Caco-2 (cell line): ENCODE measurements at regions of chr3 and their contacts with region 1.

Region 1: DNA sequence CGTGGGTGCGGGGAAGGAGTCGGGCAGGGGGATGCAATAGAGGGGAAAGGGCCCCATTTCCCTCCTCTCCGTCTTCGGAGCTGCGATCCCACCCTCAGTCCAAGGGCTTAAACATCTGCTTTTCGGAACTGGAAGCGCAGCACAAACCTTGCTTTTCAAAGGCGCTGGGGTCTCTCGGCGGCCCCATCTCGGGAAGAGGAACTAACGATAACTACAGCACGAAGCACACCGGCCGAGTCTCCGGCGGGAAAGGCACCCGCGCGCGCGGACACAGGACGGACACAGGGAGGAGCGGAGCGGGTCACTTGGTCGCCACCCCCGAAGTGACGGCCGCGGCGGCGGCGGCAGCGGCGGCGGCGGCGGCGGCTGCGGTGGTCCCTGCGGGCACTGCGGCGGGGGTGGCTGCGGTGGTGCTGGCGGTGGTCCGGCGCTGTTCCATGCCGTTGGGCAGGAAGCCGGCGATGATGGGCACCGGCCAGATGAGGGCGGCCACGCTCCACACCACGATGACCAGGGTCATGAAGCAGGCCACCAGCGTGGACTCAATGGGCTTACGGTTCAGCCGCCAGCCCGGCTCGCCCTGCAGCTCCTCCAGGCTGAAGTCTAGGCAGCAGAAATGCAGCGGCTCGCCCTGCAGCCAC is 1.1 kb downstream of the TMEM158 start:
- DNase-seq: peak; percentile 74 to 84
- H3K4me3 ChIP-seq: peak overlapping the region; percentile 44
- H3K4me3 Mint-ChIP-seq: peak overlapping the region; percentile 74
- H3K27ac Mint-ChIP-seq: no peak overlapping the region
- H3K4me1 ChIP-seq: peaks cover 5% of the 10 kb centered on the region; the same call in 1 of the 2 replicates
- H3K4me1 Mint-ChIP-seq: no peaks in the 10 kb centered on the region
- H3K27me3 ChIP-seq: peaks cover 4% of the 10 kb centered on the region; the same call in 1 of the 2 replicates
- H3K27me3 Mint-ChIP-seq: peaks cover 14% of the 10 kb centered on the region
- CTCF ChIP-seq: peak; percentile 39 to 68

Region 2: DNA sequence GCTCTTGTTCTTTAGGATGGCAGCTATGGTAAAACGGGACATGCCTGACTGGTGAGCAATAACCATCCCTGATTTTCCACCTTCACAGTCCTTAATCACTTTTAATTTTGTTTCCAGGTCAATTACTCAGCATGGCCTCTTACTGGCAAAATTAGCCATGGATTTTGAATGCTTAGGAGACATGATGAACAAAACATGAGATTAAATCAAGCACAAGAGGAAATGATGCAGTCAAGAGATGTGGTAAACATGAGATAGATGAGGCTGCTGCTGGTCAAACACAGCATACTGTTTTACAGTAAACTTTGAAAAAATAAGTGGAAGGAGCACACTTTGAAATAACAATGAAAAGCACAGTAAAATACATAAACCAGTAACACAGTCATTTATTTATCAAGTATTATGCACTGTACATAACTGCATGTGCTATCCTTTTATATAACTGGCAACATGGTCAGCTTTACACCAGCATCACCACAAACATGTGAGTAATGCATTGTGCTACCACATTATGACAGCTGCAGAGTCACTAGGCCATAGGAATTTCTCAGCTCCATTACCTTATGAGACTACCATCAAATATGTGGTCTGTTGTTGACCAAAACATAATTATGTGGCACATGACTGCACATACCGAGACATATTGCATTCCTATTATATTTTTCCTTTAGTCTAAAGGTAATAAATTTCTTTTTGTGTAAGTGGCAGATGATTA is 542.6 kb before region 1 on chr3:
- CTCF ChIA-PET with region 1: no interaction called
- POLR2A ChIA-PET with region 1: no interaction called
- intact Hi-C with region 1: no loop called
- DNase-seq: no peak
- H3K4me3 ChIP-seq: no peak overlapping the region
- H3K4me3 Mint-ChIP-seq: no peak overlapping the region
- H3K27ac Mint-ChIP-seq: no peak overlapping the region
- H3K4me1 ChIP-seq: no peaks in the 10 kb centered on the region
- H3K4me1 Mint-ChIP-seq: no peaks in the 10 kb centered on the region
- H3K27me3 ChIP-seq: no peaks in the 10 kb centered on the region
- H3K27me3 Mint-ChIP-seq: peaks cover 4% of the 10 kb centered on the region
- CTCF ChIP-seq: no peak

Region 3: GRCh38 chr3:45182915-45183867 is 41.8 kb before region 1 on chr3:
- CTCF ChIA-PET with region 1: no interaction called
- POLR2A ChIA-PET with region 1: no interaction called
- intact Hi-C with region 1: no loop called
- DNase-seq: peak; percentile 62 to 67
- H3K4me3 ChIP-seq: no peak overlapping the region
- H3K4me3 Mint-ChIP-seq: no peak overlapping the region
- H3K27ac Mint-ChIP-seq: peak overlapping the region; percentile 37
- H3K4me1 ChIP-seq: peaks cover 12% of the 10 kb centered on the region
- H3K4me1 Mint-ChIP-seq: peaks cover 16% of the 10 kb centered on the region
- H3K27me3 ChIP-seq: no peaks in the 10 kb centered on the region
- H3K27me3 Mint-ChIP-seq: no peaks in the 10 kb centered on the region
- CTCF ChIP-seq: no peak

Region 4: DNA sequence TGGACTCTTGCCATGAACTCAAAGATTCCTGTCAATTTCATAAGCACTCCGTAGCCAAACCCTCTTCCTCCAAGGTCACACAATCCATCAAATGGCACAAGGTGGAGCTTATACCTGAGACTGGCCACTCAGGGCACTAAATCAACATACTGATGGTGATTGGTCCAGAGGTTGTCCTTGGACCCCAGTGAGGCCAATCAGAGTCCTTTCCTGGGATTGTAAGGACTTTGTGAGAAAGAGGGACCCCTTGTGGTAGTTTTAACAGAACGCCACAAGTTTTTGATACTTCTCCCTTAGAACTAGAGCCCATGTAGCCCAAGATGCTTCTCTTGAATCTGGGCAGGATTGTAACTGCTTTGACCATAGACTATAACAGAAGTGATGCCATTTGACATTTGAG is 119.0 kb after region 1 on chr3:
- CTCF ChIA-PET with region 1: no interaction called
- POLR2A ChIA-PET with region 1: no interaction called
- intact Hi-C with region 1: loop called (anchors 5 kb)
- DNase-seq: peak; percentile 11 to 50
- H3K4me3 ChIP-seq: no peak overlapping the region
- H3K4me3 Mint-ChIP-seq: no peak overlapping the region
- H3K27ac Mint-ChIP-seq: no peak overlapping the region
- H3K4me1 ChIP-seq: no peaks in the 10 kb centered on the region
- H3K4me1 Mint-ChIP-seq: no peaks in the 10 kb centered on the region
- H3K27me3 ChIP-seq: no peaks in the 10 kb centered on the region
- H3K27me3 Mint-ChIP-seq: peaks cover 5% of the 10 kb centered on the region
- CTCF ChIP-seq: peak in 1 of 2 experiments; percentile 1

Region 5: GRCh38 chr3:45486136-45486535 is 261.2 kb after region 1 on chr3:
- CTCF ChIA-PET with region 1: no interaction called
- POLR2A ChIA-PET with region 1: no interaction called
- intact Hi-C with region 1: no loop called
- DNase-seq: no peak
- H3K4me3 ChIP-seq: no peak overlapping the region
- H3K4me3 Mint-ChIP-seq: no peak overlapping the region
- H3K27ac Mint-ChIP-seq: no peak overlapping the region
- H3K4me1 ChIP-seq: peaks cover 1% of the 10 kb centered on the region
- H3K4me1 Mint-ChIP-seq: peaks cover under 1% of the 10 kb centered on the region
- H3K27me3 ChIP-seq: no peaks in the 10 kb centered on the region
- H3K27me3 Mint-ChIP-seq: no peaks in the 10 kb centered on the region
- CTCF ChIP-seq: no peak

Region 6: GRCh38 chr3:45507820-45508317 is 282.9 kb after region 1 on chr3:
- CTCF ChIA-PET with region 1: interaction called, 3 read pairs
- POLR2A ChIA-PET with region 1: no interaction called
- intact Hi-C with region 1: loop called (anchors 2 kb)
- DNase-seq: peak in 1 of 2 experiments; percentile 15
- H3K4me3 ChIP-seq: no peak overlapping the region
- H3K4me3 Mint-ChIP-seq: no peak overlapping the region
- H3K27ac Mint-ChIP-seq: no peak overlapping the region
- H3K4me1 ChIP-seq: no peaks in the 10 kb centered on the region
- H3K4me1 Mint-ChIP-seq: peaks cover 6% of the 10 kb centered on the region
- H3K27me3 ChIP-seq: no peaks in the 10 kb centered on the region
- H3K27me3 Mint-ChIP-seq: no peaks in the 10 kb centered on the region
- CTCF ChIP-seq: peak in 1 of 2 experiments; percentile 24